GM12878 (cell line): ENCODE measurements at regions of chr2 and their contacts with region 1.

Region 1: GRCh38 chr2:11904029-11904428 is 157.6 kb downstream of the LPIN1 start:
- DNase-seq: no peak
- ATAC-seq: peak; percentile 87
- H3K4me3 ChIP-seq: no peak overlapping the region
- H3K27ac ChIP-seq: no peak overlapping the region
- H3K4me1 ChIP-seq: no peaks in the 10 kb centered on the region
- H3K27me3 ChIP-seq: no peaks in the 10 kb centered on the region
- CTCF ChIP-seq: peak; percentile 17 to 47 (median 27); a peak in 3 of 6 replicates
- EP300 ChIP-seq: no peak
- POLR2A ChIP-seq: no peak
- RAD21 ChIP-seq: peak; percentile 53

Region 2: GRCh38 chr2:11891028-11891427 is 13.0 kb before region 1 on chr2:
- CTCF ChIA-PET with region 1: interaction called, 10 read pairs
- POLR2A ChIA-PET with region 1: interaction called, 6 read pairs
- RAD21 ChIA-PET with region 1: interaction called, 3 read pairs
- SMC1A ChIA-PET with region 1: interaction called, 9 read pairs
- in situ Hi-C with region 1: no loop called
- intact Hi-C with region 1: no loop called
- DNase-seq: no peak
- ATAC-seq: no peak; the same call in 2 of the 3 replicates
- H3K4me3 ChIP-seq: no peak overlapping the region
- H3K27ac ChIP-seq: no peak overlapping the region
- H3K4me1 ChIP-seq: no peaks in the 10 kb centered on the region
- H3K27me3 ChIP-seq: no peaks in the 10 kb centered on the region
- CTCF ChIP-seq: no peak
- EP300 ChIP-seq: no peak
- POLR2A ChIP-seq: no peak
- RAD21 ChIP-seq: no peak

Region 3: GRCh38 chr2:11914455-11914854 is 10.4 kb after region 1 on chr2:
- CTCF ChIA-PET with region 1: interaction called, 8 read pairs
- POLR2A ChIA-PET with region 1: interaction called, 6 read pairs
- RAD21 ChIA-PET with region 1: interaction called, 4 read pairs
- SMC1A ChIA-PET with region 1: interaction called, 10 read pairs
- in situ Hi-C with region 1: no loop called
- intact Hi-C with region 1: no loop called
- DNase-seq: no peak
- ATAC-seq: no peak
- H3K4me3 ChIP-seq: no peak overlapping the region
- H3K27ac ChIP-seq: no peak overlapping the region
- H3K4me1 ChIP-seq: peaks cover 5% of the 10 kb centered on the region; the same call in 1 of the 2 replicates
- H3K27me3 ChIP-seq: no peaks in the 10 kb centered on the region
- CTCF ChIP-seq: no peak
- EP300 ChIP-seq: no peak
- POLR2A ChIP-seq: no peak
- RAD21 ChIP-seq: no peak